ENCODE measurements at regions of chr7 and their contacts with region 1.

Region 1: GRCh38 chr7:26143298-26144048 is 8.5 kb upstream of the NFE2L3 start:
- DNase-seq: no peak
- ATAC-seq: no peak
- H3K4me3 ChIP-seq: no peak overlapping the region
- H3K4me3 Mint-ChIP-seq: no peak overlapping the region
- H3K27ac ChIP-seq: no peak overlapping the region
- H3K27ac Mint-ChIP-seq: no peak overlapping the region
- H3K4me1 ChIP-seq: no peaks in the 10 kb centered on the region
- H3K4me1 Mint-ChIP-seq: no peaks in the 10 kb centered on the region
- H3K27me3 ChIP-seq: peaks cover 0 to 10% (median 1%) of the 10 kb centered on the region in 4 experiments
- H3K27me3 Mint-ChIP-seq: peaks cover 13% of the 10 kb centered on the region
- CTCF ChIP-seq: no peak

Region 2: GRCh38 chr7:26216049-26216448 is 72.6 kb after region 1 on chr7:
- CTCF ChIA-PET with region 1: no interaction called
- POLR2A ChIA-PET with region 1: interaction called, 10 read pairs
- intact Hi-C with region 1: no loop called
- DNase-seq: no peak
- ATAC-seq: no peak
- H3K4me3 ChIP-seq: no peak overlapping the region
- H3K4me3 Mint-ChIP-seq: no peak overlapping the region
- H3K27ac ChIP-seq: no peak overlapping the region
- H3K27ac Mint-ChIP-seq: no peak overlapping the region
- H3K4me1 ChIP-seq: no peaks in the 10 kb centered on the region
- H3K4me1 Mint-ChIP-seq: peaks cover 10% of the 10 kb centered on the region
- H3K27me3 ChIP-seq: no peaks in the 10 kb centered on the region
- H3K27me3 Mint-ChIP-seq: no peaks in the 10 kb centered on the region
- CTCF ChIP-seq: no peak

Region 3: GRCh38 chr7:26307226-26307625 is 163.8 kb after region 1 on chr7:
- CTCF ChIA-PET with region 1: no interaction called
- POLR2A ChIA-PET with region 1: no interaction called
- intact Hi-C with region 1: no loop called
- DNase-seq: no peak
- ATAC-seq: no peak
- H3K4me3 ChIP-seq: no peak overlapping the region
- H3K4me3 Mint-ChIP-seq: no peak overlapping the region
- H3K27ac ChIP-seq: peak overlapping the region in 1 of 2 donors; percentile 11
- H3K27ac Mint-ChIP-seq: peak overlapping the region; percentile 81
- H3K4me1 ChIP-seq: peaks cover 25 to 48% of the 10 kb centered on the region in 2 donors
- H3K4me1 Mint-ChIP-seq: peaks cover 57% of the 10 kb centered on the region
- H3K27me3 ChIP-seq: no peaks in the 10 kb centered on the region
- H3K27me3 Mint-ChIP-seq: no peaks in the 10 kb centered on the region
- CTCF ChIP-seq: no peak

Region 4: GRCh38 chr7:26515314-26515842 is 371.9 kb after region 1 on chr7:
- CTCF ChIA-PET with region 1: no interaction called
- POLR2A ChIA-PET with region 1: no interaction called
- intact Hi-C with region 1: no loop called
- DNase-seq: no peak
- ATAC-seq: no peak
- H3K4me3 ChIP-seq: no peak overlapping the region
- H3K4me3 Mint-ChIP-seq: no peak overlapping the region
- H3K27ac ChIP-seq: no peak overlapping the region
- H3K27ac Mint-ChIP-seq: no peak overlapping the region
- H3K4me1 ChIP-seq: no peaks in the 10 kb centered on the region
- H3K4me1 Mint-ChIP-seq: no peaks in the 10 kb centered on the region
- H3K27me3 ChIP-seq: peaks cover 0 to 10% (median 4%) of the 10 kb centered on the region in 4 experiments
- H3K27me3 Mint-ChIP-seq: peaks cover 13% of the 10 kb centered on the region
- CTCF ChIP-seq: no peak